ENCODE measurements at regions of chr6 and their contacts with region 1.

Region 1: DNA sequence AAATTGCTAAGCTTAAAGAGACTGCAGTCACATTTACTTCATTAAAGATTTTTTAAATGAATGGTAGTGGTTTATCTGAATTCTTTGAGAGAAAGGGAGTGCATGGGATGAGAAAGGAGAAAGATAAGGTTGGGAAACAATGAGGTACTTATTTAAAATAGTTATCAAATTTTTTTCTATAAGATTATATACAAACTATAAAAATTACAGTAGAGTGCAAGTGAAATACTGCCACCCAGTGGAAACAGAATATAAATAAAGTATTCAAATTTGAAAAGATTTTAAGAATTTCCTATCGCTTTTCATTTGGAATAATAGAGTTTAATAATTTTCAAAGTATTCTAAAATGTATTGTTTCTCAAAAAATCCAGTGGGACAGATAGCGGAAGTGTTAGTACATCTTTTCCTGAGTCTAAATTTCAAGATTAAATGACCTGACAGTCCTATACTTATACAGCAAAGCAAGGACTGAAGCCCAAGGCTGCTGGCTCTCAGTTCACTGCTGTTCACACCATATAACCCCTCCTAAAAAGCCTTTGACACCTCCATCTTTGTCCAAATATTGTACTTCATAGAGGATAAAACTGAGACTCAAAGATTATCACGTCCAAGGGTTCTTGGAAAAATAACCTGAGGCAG is 31.1 kb downstream of the EPM2A start:
- DNase-seq: peak; percentile 38
- ATAC-seq: no peak
- H3K4me3 ChIP-seq: no peak overlapping the region
- H3K27ac ChIP-seq: no peak overlapping the region
- H3K4me1 ChIP-seq: peaks cover 2% of the 10 kb centered on the region; the same call in 1 of the 2 replicates
- H3K27me3 ChIP-seq: no peaks in the 10 kb centered on the region
- CTCF ChIP-seq: peak; percentile 54
- POLR2A ChIP-seq: no peak
- RAD21 ChIP-seq: peak; percentile 54

Region 2: GRCh38 chr6:144931172-144932035 is 772.9 kb before region 1 on chr6:
- CTCF ChIA-PET with region 1: no interaction called
- POLR2A ChIA-PET with region 1: no interaction called
- dilution Hi-C with region 1: no loop called
- in situ Hi-C with region 1: no loop called
- intact Hi-C with region 1: loop called (anchors 10 kb)
- DNase-seq: peak; percentile 36
- ATAC-seq: peak; percentile 76
- H3K4me3 ChIP-seq: no peak overlapping the region
- H3K27ac ChIP-seq: no peak overlapping the region
- H3K4me1 ChIP-seq: no peaks in the 10 kb centered on the region
- H3K27me3 ChIP-seq: no peaks in the 10 kb centered on the region
- CTCF ChIP-seq: peak; percentile 66
- POLR2A ChIP-seq: no peak
- RAD21 ChIP-seq: peak; percentile 70

Region 3: DNA sequence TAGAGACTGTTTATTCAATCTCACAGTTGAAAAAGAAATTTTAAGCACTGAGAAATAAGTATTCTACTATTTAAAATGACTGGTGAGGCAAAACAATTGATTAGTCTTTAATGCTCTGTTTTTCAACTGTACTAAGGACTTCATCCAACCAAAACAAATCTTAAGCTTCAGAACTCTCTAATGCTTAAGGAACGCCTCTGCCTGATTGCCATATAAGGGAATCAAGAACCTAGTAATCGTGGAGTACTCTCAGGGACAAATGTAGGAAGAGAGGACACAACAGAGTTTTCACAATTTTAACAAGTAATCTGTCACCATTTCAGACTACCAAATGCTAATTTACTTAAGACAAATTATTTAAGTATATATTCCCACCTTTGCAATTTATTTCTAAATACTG is 94.3 kb after region 1 on chr6:
- CTCF ChIA-PET with region 1: no interaction called
- POLR2A ChIA-PET with region 1: no interaction called
- dilution Hi-C with region 1: no loop called
- in situ Hi-C with region 1: no loop called
- intact Hi-C with region 1: no loop called
- DNase-seq: peak; percentile 62
- ATAC-seq: peak; percentile 77
- H3K4me3 ChIP-seq: no peak overlapping the region
- H3K27ac ChIP-seq: no peak overlapping the region
- H3K4me1 ChIP-seq: no peaks in the 10 kb centered on the region
- H3K27me3 ChIP-seq: no peaks in the 10 kb centered on the region
- CTCF ChIP-seq: no peak
- POLR2A ChIP-seq: no peak
- RAD21 ChIP-seq: no peak